Activated CD4-positive, alpha-beta memory T cell treated with anti-CD3 and anti-CD28 coated beads, Interleukin-2, amount 10 ng/mL, durations not matched to agents 7 days and 5 days (primary cell): ENCODE measurements at regions of chr15 and their contacts with region 1.

Region 1: DNA sequence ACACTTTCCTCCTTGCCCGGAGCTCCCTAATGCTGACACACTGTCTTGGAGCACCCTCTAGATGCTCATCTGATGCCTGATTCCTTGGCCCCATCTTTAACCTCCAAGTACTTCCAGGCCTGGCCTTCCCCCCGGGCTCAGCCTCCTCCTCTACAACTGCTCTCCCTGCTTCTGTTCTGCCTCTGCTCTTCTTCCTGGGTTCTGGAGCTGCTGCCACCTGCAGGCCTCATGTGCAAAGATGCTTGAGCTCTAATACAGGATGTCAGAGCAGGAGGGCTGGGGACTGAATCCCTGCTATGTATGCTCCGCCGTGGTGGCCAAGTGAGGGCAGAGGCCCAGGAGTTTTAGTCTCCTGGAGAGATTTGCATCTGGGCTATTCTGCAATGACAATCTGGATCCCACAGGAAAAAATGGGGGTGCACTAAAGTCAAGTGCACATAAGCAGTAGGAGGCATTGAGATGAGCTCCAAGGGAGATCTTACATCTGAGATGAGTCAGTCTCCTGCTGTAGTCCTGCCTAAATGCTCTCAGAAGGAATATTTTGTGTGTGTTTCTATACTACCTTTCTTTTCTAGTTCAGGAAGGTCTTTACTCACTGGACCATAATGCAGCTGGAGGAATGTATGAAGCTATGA is 296.3 kb downstream of the UACA start:
- DNase-seq: peak; percentile 58
- H3K4me3 Mint-ChIP-seq: no peak overlapping the region
- H3K27ac Mint-ChIP-seq: no peak overlapping the region
- H3K4me1 Mint-ChIP-seq: no peaks in the 10 kb centered on the region
- H3K27me3 Mint-ChIP-seq: peaks cover 81% of the 10 kb centered on the region

Region 2: GRCh38 chr15:69475769-69476358 is 991.1 kb before region 1 on chr15:
- CTCF ChIA-PET with region 1: interaction called, 14 read pairs
- POLR2A ChIA-PET with region 1: no interaction called
- DNase-seq: peak; percentile 71
- H3K4me3 Mint-ChIP-seq: no peak overlapping the region
- H3K27ac Mint-ChIP-seq: no peak overlapping the region
- H3K4me1 Mint-ChIP-seq: no peaks in the 10 kb centered on the region
- H3K27me3 Mint-ChIP-seq: peaks cover 26% of the 10 kb centered on the region

Region 3: DNA sequence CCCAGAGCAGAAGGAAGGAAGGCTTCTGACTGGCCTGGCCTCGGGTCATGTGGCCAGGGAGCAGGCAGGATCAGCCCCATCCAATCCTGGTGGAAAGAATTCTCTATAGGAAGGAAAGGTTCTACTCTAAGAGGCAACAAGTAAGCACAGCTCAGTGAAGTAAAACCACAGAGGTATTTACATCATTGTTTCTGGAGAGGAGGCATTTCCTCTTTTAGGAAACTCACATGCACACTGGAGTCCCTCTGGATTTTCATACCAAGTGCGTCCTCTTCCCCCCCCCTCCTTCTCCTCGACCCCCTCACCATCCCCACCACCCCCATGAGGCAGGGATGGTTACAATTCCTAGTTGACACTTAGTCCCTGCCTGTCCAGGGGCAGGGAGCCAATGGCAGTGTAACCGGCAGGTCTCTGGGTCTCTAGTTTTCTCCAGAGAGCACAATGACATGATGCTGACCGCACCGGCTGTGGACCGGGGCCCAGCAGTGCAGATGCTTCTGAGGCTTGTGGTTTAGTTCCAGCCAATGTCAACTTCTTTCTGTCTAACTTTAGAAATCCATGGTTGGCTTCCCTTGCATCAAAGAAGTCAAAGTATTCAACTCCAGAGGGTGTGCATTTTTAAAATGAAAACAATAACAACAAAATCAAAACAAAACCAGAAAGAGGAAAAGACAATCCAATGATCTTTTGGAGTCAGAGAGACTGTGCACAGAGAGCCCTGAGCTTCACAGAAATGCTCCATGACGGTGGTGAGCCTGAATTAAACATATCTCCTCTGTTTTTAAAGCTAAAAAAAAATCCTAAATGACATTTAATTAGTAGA is 138.9 kb before region 1 on chr15:
- CTCF ChIA-PET with region 1: no interaction called
- POLR2A ChIA-PET with region 1: no interaction called
- DNase-seq: no peak
- H3K4me3 Mint-ChIP-seq: no peak overlapping the region
- H3K27ac Mint-ChIP-seq: no peak overlapping the region
- H3K4me1 Mint-ChIP-seq: no peaks in the 10 kb centered on the region
- H3K27me3 Mint-ChIP-seq: peaks cover 18% of the 10 kb centered on the region

Region 4: GRCh38 chr15:70410216-70410977 is 56.6 kb before region 1 on chr15:
- CTCF ChIA-PET with region 1: no interaction called
- POLR2A ChIA-PET with region 1: no interaction called
- DNase-seq: no peak
- H3K4me3 Mint-ChIP-seq: no peak overlapping the region
- H3K27ac Mint-ChIP-seq: no peak overlapping the region
- H3K4me1 Mint-ChIP-seq: no peaks in the 10 kb centered on the region
- H3K27me3 Mint-ChIP-seq: peaks cover 4% of the 10 kb centered on the region

Region 5: GRCh38 chr15:70451821-70452653 is 15.0 kb before region 1 on chr15:
- CTCF ChIA-PET with region 1: interaction called, 15 read pairs
- POLR2A ChIA-PET with region 1: interaction called, 3 read pairs
- DNase-seq: no peak
- H3K4me3 Mint-ChIP-seq: no peak overlapping the region
- H3K27ac Mint-ChIP-seq: no peak overlapping the region
- H3K4me1 Mint-ChIP-seq: peaks cover 20% of the 10 kb centered on the region
- H3K27me3 Mint-ChIP-seq: peaks cover 43% of the 10 kb centered on the region

Region 6: DNA sequence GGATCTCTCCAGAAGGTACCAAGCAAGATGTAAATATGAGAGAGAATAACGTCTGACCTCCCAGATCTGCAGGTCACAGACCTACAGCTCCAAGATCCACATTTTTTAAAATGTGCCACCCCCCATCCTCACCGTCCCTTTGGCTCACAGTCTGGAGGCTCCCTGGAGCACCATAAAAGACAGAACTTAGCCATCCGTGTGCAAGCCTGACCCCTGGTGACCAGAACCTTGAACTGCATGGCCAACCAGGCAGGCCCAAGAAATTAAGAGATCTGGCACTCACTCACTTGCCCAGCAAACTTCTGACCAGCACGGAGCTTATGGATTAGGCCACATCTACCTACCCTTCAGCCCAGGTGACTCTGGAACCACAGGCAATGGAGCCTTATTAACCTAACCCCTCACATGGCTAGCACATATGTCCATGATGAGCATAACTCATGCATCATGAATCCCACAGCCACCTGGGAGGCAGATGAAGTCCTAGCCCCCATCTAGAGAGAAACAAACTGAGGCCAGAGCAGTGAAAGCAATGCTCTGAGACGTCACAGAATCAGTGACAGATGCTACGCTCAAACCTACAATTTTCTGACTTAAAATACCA is 21.1 kb after region 1 on chr15:
- CTCF ChIA-PET with region 1: interaction called, 21 read pairs
- POLR2A ChIA-PET with region 1: interaction called, 4 read pairs
- DNase-seq: peak; percentile 75
- H3K4me3 Mint-ChIP-seq: no peak overlapping the region
- H3K27ac Mint-ChIP-seq: no peak overlapping the region
- H3K4me1 Mint-ChIP-seq: peaks cover 58% of the 10 kb centered on the region
- H3K27me3 Mint-ChIP-seq: peaks cover 75% of the 10 kb centered on the region

Region 7: DNA sequence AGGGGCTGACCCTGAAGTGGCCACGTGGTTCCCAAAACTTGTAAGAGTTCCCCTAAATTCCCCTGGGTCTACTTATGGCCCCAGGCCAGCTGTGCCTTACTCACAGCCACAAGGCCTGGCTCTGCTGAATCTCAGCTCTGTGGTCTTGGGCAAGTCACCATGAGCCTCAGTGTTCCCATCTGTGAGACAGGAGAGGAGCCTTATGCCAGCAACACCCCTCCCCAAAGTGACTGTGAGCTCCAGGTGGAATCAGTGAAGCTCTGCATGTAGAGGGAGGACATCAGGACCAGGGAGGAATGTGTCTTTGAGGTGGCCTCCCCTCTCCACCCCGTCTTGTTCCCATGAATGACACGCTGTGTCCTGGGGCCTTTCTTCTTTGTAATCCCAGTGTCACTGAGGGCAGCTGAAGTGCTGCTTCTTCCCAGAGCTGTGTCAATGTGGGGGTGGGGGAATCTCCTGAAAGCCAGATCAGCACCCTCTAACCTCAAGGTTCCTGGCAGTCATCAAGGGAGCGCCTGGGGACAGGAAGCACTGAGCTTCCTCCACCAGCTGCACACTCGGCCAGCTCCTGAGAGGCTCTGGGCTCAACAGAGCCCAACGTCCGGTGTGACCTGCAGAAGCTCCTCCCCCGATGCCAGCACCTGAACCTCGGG is 37.4 kb after region 1 on chr15:
- CTCF ChIA-PET with region 1: interaction called, 21 read pairs
- POLR2A ChIA-PET with region 1: no interaction called
- DNase-seq: peak; percentile 26
- H3K4me3 Mint-ChIP-seq: no peak overlapping the region
- H3K27ac Mint-ChIP-seq: peak overlapping the region; percentile 45
- H3K4me1 Mint-ChIP-seq: peaks cover 63% of the 10 kb centered on the region
- H3K27me3 Mint-ChIP-seq: peaks cover 43% of the 10 kb centered on the region

Region 8: DNA sequence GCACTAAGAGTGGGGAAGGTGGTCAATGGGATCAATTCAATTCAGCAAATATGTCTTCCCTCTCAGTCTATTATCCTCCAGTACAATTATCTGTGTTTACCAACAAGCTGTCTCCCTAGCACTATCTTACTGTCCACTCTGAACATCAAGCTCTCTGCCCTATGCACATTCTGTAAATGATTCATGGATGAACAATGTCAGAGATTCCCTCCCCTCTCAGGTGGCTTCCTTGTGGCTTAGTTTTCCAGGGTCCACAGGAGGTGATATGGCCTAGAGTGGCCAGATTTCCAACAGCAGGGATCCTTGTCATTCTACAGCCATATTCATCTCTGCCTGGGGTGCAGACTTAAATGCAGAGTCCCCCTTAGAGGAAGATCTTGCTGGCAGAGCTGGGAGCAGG is 71.3 kb after region 1 on chr15:
- CTCF ChIA-PET with region 1: no interaction called
- POLR2A ChIA-PET with region 1: no interaction called
- DNase-seq: no peak
- H3K4me3 Mint-ChIP-seq: no peak overlapping the region
- H3K27ac Mint-ChIP-seq: no peak overlapping the region
- H3K4me1 Mint-ChIP-seq: peaks cover 30% of the 10 kb centered on the region
- H3K27me3 Mint-ChIP-seq: peaks cover 33% of the 10 kb centered on the region